Esophagus muscularis mucosa (tissue), 4 donors: ENCODE measurements at regions of chr2 and their contacts with region 1.

Region 1: GRCh38 chr2:179410552-179411356 is 146.1 kb upstream of the SESTD1 start:
- DNase-seq: no peak
- H3K4me3 ChIP-seq: no peak overlapping the region
- H3K27ac ChIP-seq: no peak overlapping the region
- H3K4me1 ChIP-seq: no peaks in the 10 kb centered on the region
- H3K27me3 ChIP-seq: no peaks in the 10 kb centered on the region
- CTCF ChIP-seq: peak; percentile 55 to 73 (median 60)
- EP300 ChIP-seq: no peak
- POLR2A ChIP-seq: no peak

Region 2: GRCh38 chr2:179226203-179226960 is 184.4 kb before region 1 on chr2:
- intact Hi-C with region 1: loop called (anchors 10 kb)
- DNase-seq: no peak
- H3K4me3 ChIP-seq: no peak overlapping the region
- H3K27ac ChIP-seq: no peak overlapping the region
- H3K4me1 ChIP-seq: peaks cover 15 to 48% (median 43%) of the 10 kb centered on the region in 4 donors
- H3K27me3 ChIP-seq: no peaks in the 10 kb centered on the region
- CTCF ChIP-seq: no peak
- EP300 ChIP-seq: no peak
- POLR2A ChIP-seq: no peak